Dorsolateral prefrontal cortex (tissue), 120 donors: ENCODE measurements at regions of chr12 and their contacts with region 1.

Region 1: GRCh38 chr12:97308576-97309198 is 153.9 kb upstream of the RMST start:
- DNase-seq: no peak
- H3K4me3 ChIP-seq: no peak overlapping the region
- H3K27ac ChIP-seq: no peak overlapping the region
- H3K27me3 ChIP-seq: peaks cover 0 to 27% (median 0%) of the 10 kb centered on the region in 45 donors
- CTCF ChIP-seq: peak; percentile 53 to 95 (median 84)

Region 2: DNA sequence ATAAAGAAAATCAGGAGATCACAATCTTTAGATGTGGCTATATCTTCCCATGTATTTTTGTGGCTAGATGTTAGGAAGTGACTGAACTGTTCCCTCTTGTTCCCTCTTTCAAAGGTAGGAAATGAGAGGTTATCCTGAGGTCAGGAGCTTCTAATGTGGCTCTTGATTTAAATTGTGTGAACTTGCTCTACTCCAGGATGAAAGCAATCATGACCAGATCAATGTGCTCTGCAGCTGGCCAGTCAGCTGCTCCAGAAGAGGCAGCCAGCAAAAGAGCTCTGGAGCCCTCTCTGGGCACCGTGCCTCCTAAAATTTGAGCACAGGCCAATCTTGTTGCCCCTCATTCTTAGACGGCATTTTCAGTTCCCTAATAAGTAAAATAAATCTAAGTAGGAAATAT is 940.5 kb before region 1 on chr12:
- intact Hi-C with region 1: no loop called
- DNase-seq: peak in 7 of 10 donors; percentile 34 to 65 (median 55)
- H3K4me3 ChIP-seq: peak overlapping the region in 7 of 59 donors; percentile 1 to 27 (median 3)
- H3K27ac ChIP-seq: peak overlapping the region in 52 of 59 donors; percentile 3 to 78 (median 60)
- H3K27me3 ChIP-seq: no peaks in the 10 kb centered on the region
- CTCF ChIP-seq: peak in 2 of 56 donors; percentile 10 to 17

Region 3: DNA sequence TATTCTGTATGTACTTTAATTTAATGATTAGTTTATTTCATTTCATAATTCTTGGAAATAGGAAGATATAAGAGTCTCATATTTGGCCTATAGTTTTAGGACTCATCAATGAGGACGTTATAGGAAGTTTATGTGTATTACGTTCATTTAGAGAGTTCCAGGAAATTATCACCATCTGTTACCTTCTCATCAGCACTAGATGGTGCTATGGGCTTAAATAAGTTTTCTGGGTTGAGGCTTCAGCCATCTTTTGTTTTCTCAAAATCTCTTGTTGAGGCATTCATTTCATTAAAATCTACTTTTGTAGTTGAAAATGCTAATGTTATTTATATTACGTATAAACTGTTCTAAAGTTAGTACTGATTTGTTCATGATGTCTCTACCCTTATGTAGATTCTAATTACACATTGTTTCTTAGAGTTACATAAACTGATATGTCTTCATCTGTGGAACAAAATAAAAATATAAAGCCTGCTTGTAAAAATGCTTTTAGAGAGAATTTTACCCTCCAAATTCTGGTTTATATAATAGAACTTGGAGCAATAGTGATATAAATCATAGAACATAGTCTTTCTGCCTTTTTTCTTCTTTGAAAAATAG is 730.1 kb before region 1 on chr12:
- intact Hi-C with region 1: loop called (anchors 5 to 10 kb)
- DNase-seq: no peak
- H3K4me3 ChIP-seq: no peak overlapping the region
- H3K27ac ChIP-seq: peak overlapping the region in 11 of 59 donors; percentile 2 to 46 (median 23)
- H3K27me3 ChIP-seq: no peaks in the 10 kb centered on the region
- CTCF ChIP-seq: peak; percentile 39 to 93 (median 72)

Region 4: DNA sequence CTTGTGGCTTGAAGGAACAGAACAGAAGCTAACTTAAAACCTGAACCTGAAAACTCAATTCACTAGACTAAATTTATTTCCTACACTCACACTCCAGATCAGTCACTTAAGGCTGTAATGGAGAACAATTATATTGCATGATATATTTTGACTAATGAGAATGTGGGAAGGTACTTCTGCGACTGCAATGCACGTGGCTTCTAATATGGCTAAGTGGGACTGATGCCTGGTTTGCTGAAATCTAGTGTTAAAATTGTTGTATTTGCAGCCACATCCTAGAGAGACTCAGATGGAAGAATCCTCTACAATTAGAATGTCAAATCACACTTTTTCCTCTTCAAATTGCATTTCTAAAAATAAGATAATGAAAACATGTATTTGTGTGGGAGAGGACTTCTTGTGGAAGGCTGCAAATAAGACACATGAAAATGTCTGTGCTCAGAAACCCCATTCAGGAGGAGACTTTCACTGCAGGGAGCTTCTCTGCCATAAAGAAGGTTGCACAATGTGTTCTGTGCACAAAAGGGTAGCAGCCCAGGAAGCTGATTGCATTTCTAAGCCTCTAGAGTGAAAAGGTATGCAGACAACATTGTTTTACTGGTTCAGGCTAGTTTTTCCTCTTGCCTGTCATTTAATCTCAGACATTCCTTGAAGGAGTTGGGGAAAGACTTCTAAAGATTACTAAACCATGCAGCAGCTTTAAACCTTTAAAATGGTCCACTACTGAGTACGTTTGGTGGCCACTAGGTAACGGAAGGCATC is 177.3 kb before region 1 on chr12:
- intact Hi-C with region 1: no loop called
- DNase-seq: no peak
- H3K4me3 ChIP-seq: no peak overlapping the region
- H3K27ac ChIP-seq: no peak overlapping the region
- H3K27me3 ChIP-seq: peaks cover 0 to 6% (median 0%) of the 10 kb centered on the region in 45 donors
- CTCF ChIP-seq: no peak

Region 5: GRCh38 chr12:97148941-97149559 is 159.6 kb before region 1 on chr12:
- intact Hi-C with region 1: loop called (anchors 2 to 10 kb)
- DNase-seq: peak in 7 of 10 donors; percentile 43 to 69 (median 56)
- H3K4me3 ChIP-seq: no peak overlapping the region
- H3K27ac ChIP-seq: no peak overlapping the region
- H3K27me3 ChIP-seq: no peaks in the 10 kb centered on the region
- CTCF ChIP-seq: peak in 55 of 56 donors; percentile 19 to 88 (median 72)

Region 6: DNA sequence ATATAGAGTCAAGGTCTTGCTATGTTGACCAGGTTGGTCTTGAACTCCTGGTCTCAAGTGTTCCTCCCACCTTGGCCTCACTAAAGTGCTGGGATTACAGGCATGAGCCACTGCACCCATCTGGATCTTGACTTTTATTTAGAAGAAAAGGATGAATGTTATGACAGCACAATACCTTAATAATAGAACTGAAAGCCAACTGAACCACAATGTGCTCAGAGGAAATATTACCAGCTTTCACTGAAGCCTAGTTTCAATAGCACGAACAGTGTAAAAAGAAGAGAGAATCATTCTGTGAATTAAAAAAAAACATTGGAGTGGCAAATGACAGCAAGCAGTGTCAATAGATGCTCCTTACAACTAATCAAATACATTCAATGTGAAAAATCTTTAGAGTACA is 85.3 kb before region 1 on chr12:
- intact Hi-C with region 1: no loop called
- DNase-seq: no peak
- H3K4me3 ChIP-seq: no peak overlapping the region
- H3K27ac ChIP-seq: no peak overlapping the region
- H3K27me3 ChIP-seq: no peaks in the 10 kb centered on the region
- CTCF ChIP-seq: no peak

Region 7: DNA sequence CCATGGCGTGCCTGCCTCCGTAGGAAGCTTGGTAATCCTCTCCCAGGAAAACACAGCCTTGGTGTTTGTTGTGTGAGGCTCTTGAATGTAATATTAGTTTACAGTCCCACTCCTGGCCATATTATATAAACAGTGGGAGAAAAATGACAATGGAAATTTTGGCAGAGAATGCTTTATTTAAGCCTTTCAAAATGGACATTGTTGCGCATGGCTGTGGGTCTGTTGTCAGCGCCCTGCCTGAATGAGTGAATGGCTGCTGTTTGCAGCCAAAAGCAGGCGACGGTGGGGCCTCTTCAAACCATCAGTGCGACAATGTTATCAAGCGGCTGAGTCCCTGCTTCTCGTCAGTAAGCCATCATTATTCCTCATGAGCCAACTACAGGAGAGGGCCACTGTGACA is 47.9 kb before region 1 on chr12:
- intact Hi-C with region 1: loop called in 1 of 2 experiments (anchors 5 kb)
- DNase-seq: no peak
- H3K4me3 ChIP-seq: peak overlapping the region in 8 of 59 donors; percentile 5 to 41 (median 12)
- H3K27ac ChIP-seq: no peak overlapping the region
- H3K27me3 ChIP-seq: peaks cover 0 to 5% (median 0%) of the 10 kb centered on the region in 45 donors
- CTCF ChIP-seq: no peak